ENCODE measurements at regions of chr6 and their contacts with region 1.

Region 1: GRCh38 chr6:16319813-16320532 is 81.6 kb downstream of the GMPR start:
- DNase-seq: no peak
- H3K4me3 ChIP-seq: peak overlapping the region; percentile 57
- CTCF ChIP-seq: no peak

Region 2: GRCh38 chr6:16292942-16293341 is 27.0 kb before region 1 on chr6:
- CTCF ChIA-PET with region 1: interaction called, 79 read pairs
- POLR2A ChIA-PET with region 1: no interaction called
- DNase-seq: no peak
- H3K4me3 ChIP-seq: no peak overlapping the region
- CTCF ChIP-seq: no peak

Region 3: DNA sequence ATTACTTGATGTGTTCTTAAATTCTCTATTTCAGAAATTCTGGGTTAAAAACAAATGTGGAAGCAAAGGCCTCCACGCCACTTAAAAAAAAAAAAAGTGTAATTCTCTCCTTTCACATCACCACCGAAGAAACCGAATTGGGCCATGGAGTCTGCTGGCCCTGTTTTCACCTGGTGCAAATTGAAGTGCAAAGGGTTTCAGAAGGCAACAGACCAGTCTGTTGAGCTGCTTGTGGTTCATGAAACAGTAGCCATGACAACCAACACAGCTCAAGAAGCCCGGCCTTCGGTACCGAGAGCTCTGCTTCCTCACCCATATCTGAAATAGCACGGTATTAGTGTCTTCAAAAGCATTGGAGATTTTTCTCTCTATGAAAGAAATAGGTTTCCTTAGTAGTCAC is 18.5 kb before region 1 on chr6:
- CTCF ChIA-PET with region 1: interaction called, 24 read pairs
- POLR2A ChIA-PET with region 1: no interaction called
- DNase-seq: no peak
- H3K4me3 ChIP-seq: no peak overlapping the region
- CTCF ChIP-seq: no peak

Measured in AG04449 (cell line).